Aorta (tissue), 5 donors: ENCODE measurements at regions of chr6 and their contacts with region 1.

Region 1: DNA sequence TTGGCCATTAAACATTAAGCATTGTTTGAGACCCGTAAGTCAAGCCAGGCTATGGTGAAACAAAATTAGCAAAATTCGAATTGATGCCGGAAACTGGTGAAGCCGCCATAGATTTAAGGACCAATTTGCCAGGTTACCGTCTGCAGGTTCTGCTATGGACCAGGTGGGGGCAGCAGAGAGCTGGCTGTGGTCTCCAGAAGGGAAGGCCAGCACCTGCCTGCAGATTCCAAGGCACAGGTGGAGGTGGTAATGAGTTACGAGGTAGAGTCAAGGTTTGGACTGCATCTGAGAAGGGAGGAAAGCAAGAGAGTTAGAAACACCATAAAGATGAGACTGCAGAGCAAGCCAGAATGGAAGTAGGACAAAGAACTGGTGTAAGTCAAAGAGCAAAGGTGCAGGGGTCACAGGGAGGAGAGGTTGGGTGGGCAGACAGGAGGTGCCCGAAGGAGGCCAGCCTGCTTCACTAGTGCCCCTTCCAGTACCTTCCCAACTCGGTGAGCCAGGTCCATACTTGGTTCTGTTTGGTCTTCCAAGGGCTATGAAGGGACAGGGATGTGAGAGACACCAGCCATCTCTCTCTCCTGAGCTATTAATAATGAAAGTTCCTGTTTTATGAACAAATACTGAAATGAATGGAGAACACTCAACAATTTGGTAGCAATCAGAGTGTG is 131.6 kb upstream of the ESR1 start:
- DNase-seq: peak in 1 of 2 donors; percentile 47
- ATAC-seq: peak; percentile 38
- H3K4me3 ChIP-seq: no peak overlapping the region
- H3K27ac ChIP-seq: no peak overlapping the region
- H3K4me1 ChIP-seq: no peaks in the 10 kb centered on the region
- H3K27me3 ChIP-seq: no peaks in the 10 kb centered on the region

Region 2: DNA sequence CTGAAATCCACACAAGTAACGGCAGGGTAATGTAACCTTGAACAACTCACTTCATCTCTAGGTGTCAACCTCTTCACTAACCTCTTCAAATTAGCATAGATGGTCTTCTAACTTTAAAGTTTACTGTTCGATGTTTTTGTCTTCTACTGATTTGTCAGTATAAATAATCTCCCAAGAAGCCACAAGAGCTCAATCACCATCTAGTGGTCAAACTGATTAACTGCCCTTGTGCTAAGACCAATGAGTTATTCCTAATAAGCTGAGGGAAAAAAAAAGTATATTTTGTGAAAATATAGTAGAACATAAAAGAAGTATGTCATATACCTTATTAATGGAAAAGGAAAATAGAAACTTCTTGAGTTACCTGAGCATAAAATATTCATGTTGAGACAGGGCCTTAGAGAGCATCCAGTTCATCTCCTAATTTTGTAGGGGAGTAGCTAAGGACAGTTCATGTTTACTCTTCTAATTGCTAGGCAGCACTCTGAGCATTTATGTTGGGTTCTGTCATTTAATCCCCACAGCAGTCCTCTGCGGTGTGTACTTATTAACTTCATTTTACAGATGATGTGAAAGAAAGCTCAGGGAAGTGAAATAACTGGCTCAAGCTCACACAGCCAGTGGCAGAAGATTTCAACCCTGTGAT is 448.7 kb after region 1 on chr6:
- intact Hi-C with region 1: loop called (anchors 10 kb)
- DNase-seq: no peak
- ATAC-seq: no peak
- H3K4me3 ChIP-seq: no peak overlapping the region
- H3K27ac ChIP-seq: no peak overlapping the region
- H3K4me1 ChIP-seq: peaks cover 0 to 3% of the 10 kb centered on the region in 2 donors
- H3K27me3 ChIP-seq: no peaks in the 10 kb centered on the region